Dorsolateral prefrontal cortex (tissue), 120 donors: ENCODE measurements at regions of chr15 and their contacts with region 1.

Region 1: GRCh38 chr15:72889545-72889944 is 106.0 kb upstream of the ADPGK start:
- DNase-seq: peak in 1 of 10 donors; percentile 17
- H3K4me3 ChIP-seq: no peak overlapping the region
- H3K27ac ChIP-seq: peak overlapping the region in 1 of 59 donors; percentile 22
- H3K27me3 ChIP-seq: no peaks in the 10 kb centered on the region
- CTCF ChIP-seq: no peak

Region 2: DNA sequence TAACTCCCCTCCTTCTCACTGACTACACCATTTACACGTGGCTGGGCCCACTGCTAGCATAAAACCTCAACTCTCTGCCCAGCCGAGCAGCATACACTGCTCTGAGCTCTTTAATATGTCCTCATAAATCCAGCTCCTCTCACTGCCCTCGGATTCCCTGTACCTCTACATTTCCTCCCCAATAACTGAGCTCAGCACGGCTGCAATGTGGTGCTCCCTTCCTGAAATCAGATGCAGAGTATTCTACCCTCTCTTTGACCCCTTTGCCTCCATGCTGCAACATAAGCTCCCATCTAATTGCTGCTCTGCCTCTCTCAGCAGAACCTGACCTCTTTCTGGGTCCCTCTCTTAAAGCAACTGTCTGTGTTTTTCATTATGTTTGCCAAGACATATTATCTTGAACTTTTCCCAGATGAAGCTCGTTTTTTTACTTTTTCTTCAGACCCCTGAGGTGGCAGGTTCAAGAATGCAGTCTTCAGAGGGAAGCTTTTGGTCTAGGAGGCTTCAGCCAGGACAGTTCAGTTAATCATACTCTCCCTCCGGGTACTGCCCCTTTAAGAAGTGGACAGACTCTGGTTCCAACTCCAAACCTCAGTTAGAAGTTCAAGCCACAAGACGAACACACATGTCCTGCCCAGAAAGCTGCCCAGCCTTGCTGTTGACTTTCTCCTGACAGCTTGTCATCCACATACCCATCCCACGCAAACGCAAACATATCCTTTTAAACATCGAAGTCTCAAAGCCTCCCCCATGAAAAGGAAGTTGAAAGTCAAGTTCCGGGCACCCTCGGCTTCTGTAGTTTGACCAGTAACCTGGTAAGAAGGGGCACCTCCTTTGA is 81.6 kb after region 1 on chr15:
- intact Hi-C with region 1: loop called in 1 of 2 experiments (anchors 10 kb)
- DNase-seq: no peak
- H3K4me3 ChIP-seq: peak overlapping the region in 51 of 59 donors; percentile 0 to 56 (median 29)
- H3K27ac ChIP-seq: peak overlapping the region in 31 of 59 donors; percentile 4 to 83 (median 48)
- H3K27me3 ChIP-seq: no peaks in the 10 kb centered on the region
- CTCF ChIP-seq: no peak